ENCODE measurements at regions of chr10 and their contacts with region 1.

Region 1: DNA sequence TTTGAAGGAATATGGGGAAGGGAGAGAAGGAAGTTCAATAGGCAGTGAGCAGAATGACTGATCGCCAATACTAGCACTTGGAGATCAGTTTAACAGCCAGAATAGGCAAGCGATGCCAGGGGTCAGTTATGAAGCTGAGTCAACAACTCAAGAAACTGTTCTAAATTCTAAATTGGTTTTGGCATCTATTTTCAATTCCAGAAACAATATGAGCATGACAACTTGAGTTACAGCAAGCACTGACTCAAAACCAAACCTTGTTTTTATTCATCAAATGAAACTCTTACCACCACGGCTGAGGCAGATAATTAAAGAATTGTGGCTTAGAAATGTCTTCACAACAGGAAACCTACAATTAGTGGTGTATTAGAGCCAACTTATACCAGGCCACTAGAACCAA is 180.5 kb upstream of the ASAH2 start:
- DNase-seq: peak; percentile 45
- H3K4me3 Mint-ChIP-seq: no peak overlapping the region
- H3K27ac Mint-ChIP-seq: peak overlapping the region; percentile 39
- H3K4me1 Mint-ChIP-seq: peaks cover 33% of the 10 kb centered on the region
- H3K27me3 Mint-ChIP-seq: no peaks in the 10 kb centered on the region

Region 2: DNA sequence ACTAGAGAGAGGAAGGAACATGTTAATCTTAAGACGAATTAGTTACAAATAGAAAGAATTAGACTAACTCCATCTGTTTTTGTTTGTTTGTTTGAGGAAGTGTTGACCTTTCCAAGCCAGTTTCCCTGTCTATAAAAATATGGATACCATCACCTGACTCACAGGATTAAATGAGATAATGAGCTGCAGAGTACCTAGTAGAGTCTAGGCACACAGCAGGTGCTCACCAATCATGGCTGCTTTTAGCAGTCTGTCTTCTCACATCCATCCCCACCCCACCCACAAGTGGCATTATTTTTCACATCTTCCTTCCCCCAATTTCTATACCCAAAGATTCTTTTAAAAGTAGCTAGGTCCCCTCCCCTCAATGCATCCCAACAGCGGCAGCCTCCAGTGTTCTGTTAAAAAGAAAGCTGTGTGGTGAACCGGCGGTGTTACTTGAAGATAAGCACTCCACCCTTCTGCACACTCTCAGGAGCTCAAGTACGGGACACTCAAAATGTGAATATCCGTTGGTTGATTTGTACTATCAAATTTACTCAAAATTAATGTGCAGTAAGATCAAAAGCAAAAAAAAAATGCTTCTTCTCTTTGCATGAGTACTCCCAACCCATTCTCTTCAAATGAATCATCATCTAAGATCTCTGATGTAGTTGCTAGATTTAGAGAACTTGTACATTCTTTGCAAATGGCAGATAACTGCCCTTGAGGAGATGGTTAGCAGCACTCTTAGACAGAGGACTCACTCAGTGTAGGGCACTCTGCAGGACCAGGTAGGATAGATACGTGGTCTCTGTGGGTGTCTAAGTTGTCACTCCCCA is 35.1 kb before region 1 on chr10:
- CTCF ChIA-PET with region 1: interaction called, 7 read pairs
- intact Hi-C with region 1: loop called (anchors 1 kb)
- DNase-seq: peak; percentile 24
- H3K4me3 Mint-ChIP-seq: peak overlapping the region; percentile 41
- H3K27ac Mint-ChIP-seq: peak overlapping the region; percentile 4
- H3K4me1 Mint-ChIP-seq: peaks cover 30% of the 10 kb centered on the region
- H3K27me3 Mint-ChIP-seq: no peaks in the 10 kb centered on the region

Region 3: DNA sequence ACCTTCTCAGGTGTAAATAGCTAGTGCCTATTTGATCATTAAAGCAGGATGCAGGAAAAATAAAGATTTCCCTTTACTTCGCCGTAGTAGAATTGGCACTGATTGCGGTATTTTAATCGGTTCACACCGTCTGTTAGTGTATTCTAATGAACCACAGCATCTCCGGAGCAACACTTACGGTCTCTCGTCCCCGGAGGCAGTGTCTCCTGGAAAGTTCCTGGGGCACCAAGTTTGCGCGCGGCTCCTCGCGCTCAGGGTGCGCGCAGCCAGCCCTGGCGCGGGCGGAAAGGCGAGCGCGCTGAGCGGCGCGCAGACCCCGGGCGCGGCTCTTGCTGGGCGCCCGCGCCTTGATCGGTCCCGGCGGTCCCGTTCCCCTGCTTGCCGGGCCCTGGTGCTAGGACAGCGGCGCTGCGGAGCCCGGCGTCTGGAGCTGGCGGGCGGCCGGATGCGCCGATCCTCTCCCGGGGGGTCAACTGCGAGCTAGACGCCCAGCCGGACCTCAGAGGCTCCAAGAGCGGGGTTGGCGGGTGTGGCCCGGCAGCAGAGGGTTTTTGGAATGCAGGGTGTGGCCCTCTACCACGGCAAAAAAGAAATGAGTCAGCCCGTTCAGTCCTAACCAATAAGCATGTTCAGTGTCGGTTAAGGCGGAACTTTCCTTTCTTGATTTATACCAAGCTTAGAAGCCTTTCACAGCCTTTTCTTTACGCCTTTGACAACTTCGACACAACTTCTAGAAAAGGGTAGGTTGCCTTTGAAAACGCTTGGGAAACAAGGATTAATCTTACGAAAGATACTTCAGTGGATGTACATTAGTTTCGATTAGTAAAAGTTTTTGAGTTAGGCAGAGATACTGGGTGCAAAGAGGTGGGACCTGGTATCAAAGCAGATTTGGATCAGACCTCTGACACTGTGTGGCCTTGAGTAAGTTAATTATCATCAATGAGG is 13.6 kb before region 1 on chr10:
- CTCF ChIA-PET with region 1: interaction called, 5 read pairs
- intact Hi-C with region 1: loop called (anchors 1 kb)
- DNase-seq: peak; percentile 58
- H3K4me3 Mint-ChIP-seq: peak overlapping the region; percentile 81
- H3K27ac Mint-ChIP-seq: no peak overlapping the region
- H3K4me1 Mint-ChIP-seq: peaks cover 23% of the 10 kb centered on the region
- H3K27me3 Mint-ChIP-seq: no peaks in the 10 kb centered on the region

Region 4: GRCh38 chr10:50497757-50498156 is 66.0 kb after region 1 on chr10:
- CTCF ChIA-PET with region 1: no interaction called
- intact Hi-C with region 1: loop called (anchors 1 kb)
- DNase-seq: no peak
- H3K4me3 Mint-ChIP-seq: no peak overlapping the region
- H3K27ac Mint-ChIP-seq: peak overlapping the region; percentile 54
- H3K4me1 Mint-ChIP-seq: peaks cover 42% of the 10 kb centered on the region
- H3K27me3 Mint-ChIP-seq: no peaks in the 10 kb centered on the region

Region 5: GRCh38 chr10:50508315-50509051 is 76.7 kb after region 1 on chr10:
- CTCF ChIA-PET with region 1: no interaction called
- intact Hi-C with region 1: loop called (anchors 1 kb)
- DNase-seq: peak; percentile 13
- H3K4me3 Mint-ChIP-seq: no peak overlapping the region
- H3K27ac Mint-ChIP-seq: no peak overlapping the region
- H3K4me1 Mint-ChIP-seq: peaks cover 49% of the 10 kb centered on the region
- H3K27me3 Mint-ChIP-seq: no peaks in the 10 kb centered on the region

Region 6: DNA sequence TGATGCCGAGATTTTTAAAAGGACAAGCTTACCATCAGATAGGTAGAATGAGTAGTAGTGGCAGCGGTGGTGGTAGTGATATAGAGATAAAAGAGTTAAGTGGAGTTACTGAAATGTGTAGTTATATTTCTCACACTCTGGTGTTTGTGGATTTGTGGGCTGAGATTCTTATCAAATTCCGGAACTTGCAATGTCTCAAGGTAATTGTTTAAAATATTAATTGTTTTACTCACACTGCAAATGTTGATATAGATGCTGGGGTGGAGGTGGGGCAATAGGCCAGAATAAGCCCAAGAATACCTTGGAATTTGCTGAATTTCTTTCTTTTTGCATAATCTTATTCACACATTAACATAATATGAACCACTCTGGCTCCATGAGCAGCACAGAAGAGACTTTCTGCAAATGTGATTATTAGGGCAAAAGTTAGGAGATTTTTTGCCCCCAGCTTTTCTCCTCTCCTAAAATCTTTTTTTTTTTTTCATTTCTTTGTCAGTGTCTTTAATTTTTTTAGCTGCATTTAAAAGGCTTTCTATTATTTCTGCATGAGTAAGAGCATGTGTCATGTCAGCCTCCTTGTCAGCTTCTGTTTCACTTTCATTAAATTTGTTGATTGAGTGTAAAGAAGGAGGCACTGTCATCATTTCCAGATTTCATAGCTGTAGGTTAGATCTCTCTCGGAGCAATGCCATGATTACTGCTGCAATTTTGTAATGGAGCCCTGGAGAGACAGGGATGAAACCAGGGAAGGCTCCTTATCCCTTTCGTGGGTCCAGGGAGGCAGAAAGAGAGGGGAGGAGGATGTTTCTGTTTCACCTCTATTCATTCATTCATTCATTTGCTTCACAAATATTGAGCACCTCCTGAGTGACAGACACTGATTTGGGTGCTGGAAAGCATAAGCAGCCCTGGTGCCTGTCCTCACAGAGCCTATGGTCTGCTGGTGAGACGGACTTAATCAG is 205.1 kb after region 1 on chr10:
- CTCF ChIA-PET with region 1: no interaction called
- intact Hi-C with region 1: loop called (anchors 1 kb)
- DNase-seq: peak; percentile 55
- H3K4me3 Mint-ChIP-seq: no peak overlapping the region
- H3K27ac Mint-ChIP-seq: peak overlapping the region; percentile 9
- H3K4me1 Mint-ChIP-seq: peaks cover 27% of the 10 kb centered on the region
- H3K27me3 Mint-ChIP-seq: peaks cover 4% of the 10 kb centered on the region

Region 7: GRCh38 chr10:50658165-50658564 is 226.4 kb after region 1 on chr10:
- CTCF ChIA-PET with region 1: no interaction called
- intact Hi-C with region 1: no loop called
- DNase-seq: no peak
- H3K4me3 Mint-ChIP-seq: no peak overlapping the region
- H3K27ac Mint-ChIP-seq: no peak overlapping the region
- H3K4me1 Mint-ChIP-seq: peaks cover 9% of the 10 kb centered on the region
- H3K27me3 Mint-ChIP-seq: peaks cover 2% of the 10 kb centered on the region

Measured in activated naive CD4-positive, alpha-beta T cell treated with anti-CD3 and anti-CD28 coated beads for 36 hours (primary cell).